BJ (cell line): ENCODE measurements at regions of chr1 and their contacts with region 1.

Region 1: GRCh38 chr1:6343506-6344405 is 49.8 kb downstream of the ACOT7 start:
- DNase-seq: no peak
- H3K4me3 ChIP-seq: no peak overlapping the region
- H3K27me3 ChIP-seq: no peaks in the 10 kb centered on the region
- CTCF ChIP-seq: peak; percentile 96

Region 2: DNA sequence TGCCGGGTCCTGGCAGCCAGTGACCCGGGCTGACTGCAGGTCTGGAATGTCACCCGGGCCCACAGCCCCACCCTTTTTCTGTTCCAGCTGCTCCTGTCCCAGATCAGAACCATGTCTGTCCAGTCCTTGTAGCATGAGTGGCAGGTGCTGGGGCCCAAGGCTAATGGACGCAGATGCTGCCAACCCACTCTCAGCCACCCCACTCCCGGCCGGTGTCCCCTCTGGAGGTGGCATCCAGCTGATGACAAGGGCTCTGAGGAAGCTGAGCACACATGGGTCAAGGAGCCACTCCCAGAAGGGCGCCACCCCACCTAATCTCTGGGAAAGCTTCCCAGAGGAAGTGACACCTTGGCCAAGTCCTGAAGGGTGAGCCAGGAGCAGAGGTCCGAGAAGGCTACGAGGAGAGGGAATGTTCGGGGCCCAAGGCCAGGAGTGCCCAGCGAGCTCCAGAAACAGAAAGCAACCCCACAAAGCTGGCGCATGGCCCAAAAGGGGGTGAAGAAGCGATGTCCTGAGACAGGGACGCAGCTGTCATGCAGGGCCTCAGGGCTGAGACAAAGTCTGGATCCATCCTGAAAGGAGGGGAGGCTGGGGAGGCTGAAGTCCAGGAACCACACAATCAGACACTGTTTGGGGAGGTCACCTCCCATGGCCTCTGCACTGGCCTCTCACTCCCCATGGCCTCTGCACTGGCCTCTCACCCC is 10.4 kb after region 1 on chr1:
- CTCF ChIA-PET with region 1: interaction called, 15 read pairs
- POLR2A ChIA-PET with region 1: no interaction called
- DNase-seq: no peak
- H3K4me3 ChIP-seq: no peak overlapping the region
- H3K27me3 ChIP-seq: no peaks in the 10 kb centered on the region
- CTCF ChIP-seq: no peak